ENCODE measurements at regions of chr18 and their contacts with region 1.

Region 1: DNA sequence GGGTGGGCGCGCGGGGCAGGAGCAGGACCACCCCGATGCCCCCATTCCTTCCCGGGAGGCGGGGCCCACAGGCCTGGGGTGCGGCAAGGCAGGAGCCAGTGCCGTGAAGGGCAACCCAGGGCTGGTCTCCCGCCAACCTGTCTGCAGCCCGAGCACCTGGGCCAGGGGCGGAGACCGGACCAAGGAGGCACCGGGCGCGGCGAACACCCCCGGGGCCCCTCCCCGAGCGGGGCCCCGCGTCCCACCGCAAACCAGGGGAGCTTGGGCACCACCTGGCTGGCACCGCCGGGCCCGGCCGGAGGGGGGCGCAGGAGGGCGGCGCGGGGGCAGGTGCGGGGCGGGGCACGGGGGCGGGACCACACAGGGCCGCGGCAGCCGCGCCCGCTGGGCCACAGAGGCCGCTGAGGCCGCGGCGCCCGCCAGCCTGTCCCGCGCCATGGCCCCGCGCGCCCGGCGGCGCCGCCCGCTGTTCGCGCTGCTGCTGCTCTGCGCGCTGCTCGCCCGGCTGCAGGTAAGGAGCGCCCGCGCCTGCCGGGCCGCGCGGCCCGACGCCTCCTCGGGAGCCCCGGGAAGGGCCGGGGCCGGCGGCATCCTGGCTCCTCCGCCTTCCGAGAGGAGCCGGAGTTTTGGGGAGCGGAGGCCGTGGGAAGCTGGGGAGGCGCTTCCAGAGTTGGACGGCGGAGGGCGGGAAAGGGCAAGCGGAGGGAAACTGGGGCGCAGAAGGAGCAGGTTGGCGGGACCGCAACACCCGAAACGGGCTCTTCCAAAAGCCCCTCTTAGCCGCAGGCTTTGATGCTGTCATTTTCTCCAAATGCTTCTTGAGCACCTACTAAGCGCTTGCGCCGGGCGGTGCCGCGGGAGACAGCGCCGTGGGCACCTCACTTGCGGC is at the start of gene TNFRSF11A:
- DNase-seq: peak; percentile 91
- H3K4me3 Mint-ChIP-seq: peak within 1 kb of the TSS; percentile 91
- H3K27ac Mint-ChIP-seq: peak within 1 kb of the TSS; percentile 89
- H3K4me1 Mint-ChIP-seq: peaks cover 54% of the 10 kb centered on the region
- H3K27me3 Mint-ChIP-seq: peaks cover 39% of the 10 kb centered on the region
- total RNA-seq, gene TNFRSF11A: 14.0 and 16.4 TPM in 2 replicates

Region 2: DNA sequence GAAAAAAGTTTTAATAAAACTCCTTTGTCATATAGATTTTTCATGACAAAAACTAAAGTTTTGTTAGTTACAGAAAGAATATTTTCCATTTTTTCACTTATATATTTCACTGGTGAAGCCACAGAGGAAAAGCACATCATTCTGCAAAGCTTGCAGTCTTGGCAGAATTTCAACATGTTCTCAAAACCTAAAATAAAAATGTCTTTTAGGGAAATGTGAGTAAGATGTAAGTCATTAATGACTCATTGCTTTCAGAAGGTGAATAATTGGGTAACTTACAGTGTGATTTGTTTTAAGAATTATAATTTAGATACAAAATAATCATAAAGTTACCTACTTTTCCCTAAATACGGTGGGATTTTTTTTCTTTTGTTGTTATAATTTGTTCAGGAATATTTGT is 43.5 kb before region 1 on chr18:
- intact Hi-C with region 1: loop called (anchors 1 kb)
- DNase-seq: no peak
- H3K4me3 Mint-ChIP-seq: no peak overlapping the region
- H3K27ac Mint-ChIP-seq: no peak overlapping the region
- H3K4me1 Mint-ChIP-seq: peaks cover 26% of the 10 kb centered on the region
- H3K27me3 Mint-ChIP-seq: no peaks in the 10 kb centered on the region

Region 3: GRCh38 chr18:62339106-62339988 is 14.2 kb after region 1 on chr18:
- intact Hi-C with region 1: loop called (anchors 1 kb)
- DNase-seq: peak; percentile 65
- H3K4me3 Mint-ChIP-seq: peak overlapping the region; percentile 59
- H3K27ac Mint-ChIP-seq: peak overlapping the region; percentile 86
- H3K4me1 Mint-ChIP-seq: peaks cover 27% of the 10 kb centered on the region
- H3K27me3 Mint-ChIP-seq: no peaks in the 10 kb centered on the region

Region 4: DNA sequence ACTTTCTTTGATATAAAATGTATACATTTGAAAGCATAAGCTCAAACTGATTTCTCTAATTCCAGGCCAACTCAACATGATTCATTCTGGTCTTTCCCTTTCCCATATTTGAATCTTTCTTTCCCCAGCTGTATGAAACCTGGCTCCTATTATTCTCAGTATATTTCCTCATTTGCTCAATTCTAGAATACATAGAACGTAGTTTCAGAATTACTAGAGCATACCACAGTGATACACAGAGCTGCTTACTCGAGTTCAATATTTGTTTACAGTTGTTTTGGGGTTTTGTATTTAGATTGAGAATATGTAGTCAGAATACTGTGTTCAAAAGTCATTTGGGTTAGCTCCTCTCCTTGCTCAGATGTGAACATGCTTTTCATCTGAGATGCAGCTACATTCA is 42.9 kb after region 1 on chr18:
- intact Hi-C with region 1: loop called (anchors 2 kb)
- DNase-seq: no peak
- H3K4me3 Mint-ChIP-seq: peak overlapping the region; percentile 32
- H3K27ac Mint-ChIP-seq: peak overlapping the region; percentile 85
- H3K4me1 Mint-ChIP-seq: peaks cover 48% of the 10 kb centered on the region
- H3K27me3 Mint-ChIP-seq: no peaks in the 10 kb centered on the region

Region 5: GRCh38 chr18:62505669-62506494 is 180.7 kb after region 1 on chr18:
- intact Hi-C with region 1: loop called (anchors 5 kb)
- DNase-seq: peak; percentile 81
- H3K4me3 Mint-ChIP-seq: peak overlapping the region; percentile 79
- H3K27ac Mint-ChIP-seq: peak overlapping the region; percentile 98
- H3K4me1 Mint-ChIP-seq: peaks cover 23% of the 10 kb centered on the region
- H3K27me3 Mint-ChIP-seq: no peaks in the 10 kb centered on the region

Region 6: GRCh38 chr18:62566199-62566598 is 241.0 kb after region 1 on chr18:
- intact Hi-C with region 1: loop called (anchors 5 kb)
- DNase-seq: peak; percentile 62
- H3K4me3 Mint-ChIP-seq: no peak overlapping the region
- H3K27ac Mint-ChIP-seq: no peak overlapping the region
- H3K4me1 Mint-ChIP-seq: peaks cover 4% of the 10 kb centered on the region
- H3K27me3 Mint-ChIP-seq: no peaks in the 10 kb centered on the region

Region 7: GRCh38 chr18:62844850-62845643 is 519.9 kb after region 1 on chr18:
- intact Hi-C with region 1: loop called (anchors 10 kb)
- DNase-seq: peak; percentile 72
- H3K4me3 Mint-ChIP-seq: peak overlapping the region; percentile 80
- H3K27ac Mint-ChIP-seq: peak overlapping the region; percentile 94
- H3K4me1 Mint-ChIP-seq: peaks cover 30% of the 10 kb centered on the region
- H3K27me3 Mint-ChIP-seq: no peaks in the 10 kb centered on the region